ENCODE measurements at regions of chr5 and their contacts with region 1.

Region 1: GRCh38 chr5:172920447-172920849 is 38.8 kb upstream of the RPL26L1 start:
- DNase-seq: no peak
- H3K4me3 ChIP-seq: no peak overlapping the region
- CTCF ChIP-seq: no peak
- POLR2A ChIP-seq: no peak

Region 2: DNA sequence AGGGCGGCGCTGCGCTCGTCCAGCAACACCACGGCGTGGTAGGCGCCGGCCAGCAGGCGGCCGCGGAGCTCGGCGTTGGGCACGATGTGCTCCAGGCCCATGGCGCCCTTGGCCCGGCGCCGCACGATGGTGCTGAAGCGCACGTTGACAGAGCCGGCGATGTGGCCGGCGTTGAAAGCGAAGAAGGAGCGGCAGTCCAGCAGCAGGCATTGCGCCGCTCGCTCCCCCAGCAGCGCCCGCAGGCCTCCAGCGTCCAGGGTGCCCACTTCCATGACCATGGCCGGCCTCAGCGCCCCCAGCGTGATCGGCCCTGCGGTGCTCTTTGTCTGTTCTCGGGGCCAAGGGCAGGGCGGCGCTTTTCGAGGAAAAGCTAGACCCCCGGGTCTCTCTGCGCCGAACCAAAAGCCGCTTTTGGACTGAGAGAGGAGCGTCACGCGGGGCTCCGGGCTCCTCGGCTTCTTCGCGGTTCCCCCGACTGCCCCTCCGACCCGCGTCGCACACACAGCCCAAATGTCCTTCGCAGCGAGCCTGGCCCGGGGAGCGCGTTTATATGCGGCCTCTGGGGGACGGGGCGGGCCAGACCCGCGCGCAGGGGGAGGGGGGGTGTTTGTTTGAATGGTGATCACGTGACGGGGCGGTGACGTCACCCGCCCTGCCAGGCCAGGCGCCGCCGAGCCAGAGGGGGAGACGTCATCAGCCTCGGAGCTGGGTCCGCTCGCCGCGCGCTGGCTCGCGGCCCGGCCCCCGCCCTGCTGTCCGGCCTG is 149.6 kb before region 1 on chr5 and contains the start of gene DUSP1:
- intact Hi-C with region 1: loop called (anchors 10 kb)
- DNase-seq: peak; percentile 99 to 100
- H3K4me3 ChIP-seq: peak within 1 kb of the TSS; percentile 75
- CTCF ChIP-seq: peak in 1 of 3 donors; percentile 13
- POLR2A ChIP-seq: peak in 1 of 2 donors; percentile 100
- total RNA-seq, gene DUSP1: 811 to 2,389 (median 1,820) TPM

Region 3: GRCh38 chr5:172868924-172869591 is 51.4 kb before region 1 on chr5:
- intact Hi-C with region 1: no loop called
- DNase-seq: peak; percentile 84 to 96
- H3K4me3 ChIP-seq: no peak overlapping the region
- CTCF ChIP-seq: no peak
- POLR2A ChIP-seq: no peak